PC-3 (cell line): ENCODE measurements at regions of chr15 and their contacts with region 1.

Region 1: GRCh38 chr15:76931397-76932007 is at the start of gene RCN2:
- DNase-seq: peak; percentile 95
- ATAC-seq: peak; percentile 99
- H3K4me3 ChIP-seq: peak within 1 kb of the TSS; percentile 85
- H3K27ac ChIP-seq: no peak within 1 kb of the TSS
- H3K4me1 ChIP-seq: peaks cover 15% of the 10 kb centered on the region
- H3K27me3 ChIP-seq: no peaks in the 10 kb centered on the region
- CTCF ChIP-seq: no peak
- total RNA-seq, gene RCN2: 73.3 and 82.7 TPM in 2 replicates

Region 2: GRCh38 chr15:76905013-76905839 is 26.3 kb before region 1 on chr15 and contains the start of gene SCAPER:
- CTCF ChIA-PET with region 1: no interaction called
- POLR2A ChIA-PET with region 1: no interaction called
- intact Hi-C with region 1: loop called (anchors 2 kb)
- DNase-seq: peak; percentile 81
- ATAC-seq: peak; percentile 84
- H3K4me3 ChIP-seq: peak within 1 kb of the TSS; percentile 93
- H3K27ac ChIP-seq: peak within 1 kb of the TSS; percentile 9; the same call in 1 of the 2 replicates
- H3K4me1 ChIP-seq: peaks cover 12% of the 10 kb centered on the region; the same call in 1 of the 2 replicates
- H3K27me3 ChIP-seq: no peaks in the 10 kb centered on the region
- CTCF ChIP-seq: no peak
- total RNA-seq, gene SCAPER: 3.6 and 6.0 TPM in 2 replicates

Region 3: DNA sequence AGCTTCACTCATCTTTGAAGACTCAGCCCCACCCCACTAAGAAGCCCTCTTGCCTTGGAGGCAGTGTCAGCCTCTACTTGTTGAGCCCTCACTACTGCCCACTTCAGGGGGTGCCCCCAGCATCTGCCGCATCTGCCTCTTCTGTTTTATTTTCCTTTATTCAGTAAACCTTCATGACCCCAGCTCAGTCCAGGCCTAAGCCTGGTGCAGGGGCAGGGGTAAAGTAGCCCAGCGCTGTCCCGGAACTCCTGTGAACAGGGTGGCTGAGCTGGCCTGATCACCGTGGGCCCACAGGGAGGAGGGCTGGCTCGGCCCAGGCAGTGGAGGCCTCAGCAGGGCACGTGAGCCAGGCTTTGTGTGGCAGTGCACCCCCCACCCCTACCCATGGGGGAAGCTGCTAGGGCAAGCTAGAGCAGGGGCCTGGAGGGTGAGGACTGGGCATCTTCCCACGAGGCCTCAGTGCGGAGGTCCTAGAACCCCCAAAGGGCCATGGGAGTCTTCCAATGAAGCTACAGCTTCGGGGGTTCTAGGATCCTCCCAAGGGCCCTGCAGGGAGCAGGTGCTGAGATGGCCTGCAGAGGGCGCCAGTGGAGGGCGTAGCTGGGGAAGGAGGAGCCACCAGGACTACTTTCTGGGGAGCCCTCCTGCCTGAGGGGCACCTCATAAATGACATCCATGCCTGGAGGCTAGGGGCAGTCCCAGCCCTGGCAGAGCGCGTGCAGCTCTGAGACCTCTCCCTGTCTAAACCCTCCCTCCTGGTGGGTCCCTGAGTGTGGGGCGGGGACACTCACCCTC is 103.4 kb after region 1 on chr15:
- CTCF ChIA-PET with region 1: no interaction called
- POLR2A ChIA-PET with region 1: no interaction called
- intact Hi-C with region 1: no loop called
- DNase-seq: peak; percentile 48
- ATAC-seq: peak; percentile 39
- H3K4me3 ChIP-seq: no peak overlapping the region
- H3K27ac ChIP-seq: no peak overlapping the region
- H3K4me1 ChIP-seq: no peaks in the 10 kb centered on the region
- H3K27me3 ChIP-seq: no peaks in the 10 kb centered on the region
- CTCF ChIP-seq: peak; percentile 80